Activated CD4-positive, alpha-beta T cell treated with anti-CD3 and anti-CD28 coated beads, Interleukin-2, amount 10 ng/mL, durations not matched to agents 24 days and 14 days (primary cell): ENCODE measurements at regions of chr9 and their contacts with region 1.

Region 1: DNA sequence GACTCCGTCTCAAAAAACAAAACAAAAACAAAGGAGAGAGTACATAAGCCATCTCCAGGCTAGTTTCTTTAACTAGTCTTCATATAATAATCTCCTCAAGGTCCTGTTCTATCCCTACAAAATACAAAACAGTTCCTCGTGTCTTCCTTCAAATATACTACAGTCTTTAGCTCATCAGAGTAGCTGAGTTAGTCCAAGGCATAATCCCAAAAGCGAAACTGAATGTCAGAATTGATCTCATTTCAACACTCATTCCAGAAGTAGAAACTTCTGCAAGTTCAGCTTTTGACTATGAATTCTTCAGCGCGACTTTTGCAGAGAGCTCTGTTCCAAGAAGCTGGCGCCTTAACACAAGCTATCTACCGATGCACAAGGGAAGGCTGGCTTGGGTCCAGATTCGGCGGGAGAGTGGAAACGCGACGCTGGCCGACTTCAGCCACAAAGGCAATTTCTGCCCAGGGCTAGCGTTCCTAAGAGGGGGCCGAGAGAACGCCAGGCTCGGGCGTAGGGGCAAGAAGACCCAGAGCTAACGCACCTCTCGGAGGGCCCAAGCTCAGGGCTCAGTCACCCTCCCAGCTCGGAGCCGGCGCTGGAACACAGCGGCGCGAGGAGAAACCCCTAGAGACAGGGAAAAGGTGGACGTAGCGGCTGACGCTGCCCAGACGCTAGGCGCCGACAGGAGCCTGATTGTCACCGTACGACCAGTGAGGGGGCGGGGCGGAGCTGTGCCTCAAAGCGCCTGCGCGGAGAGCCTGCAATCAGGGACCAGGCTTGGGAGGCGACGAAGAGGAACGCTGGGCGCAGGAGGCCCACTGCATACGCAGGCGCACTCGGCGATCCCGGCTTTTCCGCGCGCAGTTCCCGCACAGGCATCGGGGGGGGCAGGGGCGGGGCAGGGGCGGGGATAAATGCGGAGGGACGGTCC is 469 bp upstream of the HSDL2 start:
- DNase-seq: peak; percentile 100
- H3K4me3 Mint-ChIP-seq: peak overlapping the region; percentile 100
- H3K27ac Mint-ChIP-seq: peak overlapping the region; percentile 100
- H3K4me1 Mint-ChIP-seq: peaks cover 42% of the 10 kb centered on the region
- H3K27me3 Mint-ChIP-seq: no peaks in the 10 kb centered on the region

Region 2: GRCh38 chr9:111631071-111631971 is 748.1 kb before region 1 on chr9 and contains the start of gene DNAJC25:
- intact Hi-C with region 1: loop called (anchors 1 kb)
- DNase-seq: peak; percentile 99
- H3K4me3 Mint-ChIP-seq: peak within 1 kb of the TSS; percentile 98
- H3K27ac Mint-ChIP-seq: peak within 1 kb of the TSS; percentile 92
- H3K4me1 Mint-ChIP-seq: peaks cover 42% of the 10 kb centered on the region
- H3K27me3 Mint-ChIP-seq: no peaks in the 10 kb centered on the region
- total RNA-seq, gene DNAJC25: 7.1 and 7.5 TPM in 2 replicates

Region 3: GRCh38 chr9:112097712-112098688 is 281.4 kb before region 1 on chr9:
- intact Hi-C with region 1: loop called (anchors 5 kb)
- DNase-seq: peak; percentile 91
- H3K4me3 Mint-ChIP-seq: no peak overlapping the region
- H3K27ac Mint-ChIP-seq: peak overlapping the region; percentile 23
- H3K4me1 Mint-ChIP-seq: peaks cover 29% of the 10 kb centered on the region
- H3K27me3 Mint-ChIP-seq: no peaks in the 10 kb centered on the region

Region 4: GRCh38 chr9:112203536-112203935 is 175.9 kb before region 1 on chr9:
- intact Hi-C with region 1: no loop called
- DNase-seq: no peak
- H3K4me3 Mint-ChIP-seq: no peak overlapping the region
- H3K27ac Mint-ChIP-seq: no peak overlapping the region
- H3K4me1 Mint-ChIP-seq: peaks cover 3% of the 10 kb centered on the region
- H3K27me3 Mint-ChIP-seq: no peaks in the 10 kb centered on the region

Region 5: DNA sequence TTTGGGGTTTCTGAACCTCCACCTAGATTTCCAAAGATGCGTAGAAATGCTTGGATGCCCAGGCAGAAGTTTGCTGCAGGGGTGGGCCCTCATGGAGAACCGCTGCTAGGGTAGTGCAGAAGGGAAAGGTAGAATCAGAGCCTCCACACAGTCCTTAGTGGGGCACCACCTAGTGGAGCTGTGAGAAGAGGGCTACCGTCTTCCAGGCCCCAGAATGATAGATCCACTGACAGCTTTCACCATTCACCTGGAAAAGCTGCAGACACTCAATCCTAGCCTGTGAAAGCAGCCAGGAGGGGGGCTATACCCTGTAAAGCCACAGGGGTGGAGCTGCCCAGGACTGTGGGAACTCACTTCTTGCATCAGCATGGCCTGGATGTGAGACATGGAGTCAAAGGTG is 12.8 kb before region 1 on chr9:
- intact Hi-C with region 1: no loop called
- DNase-seq: no peak
- H3K4me3 Mint-ChIP-seq: no peak overlapping the region
- H3K27ac Mint-ChIP-seq: no peak overlapping the region
- H3K4me1 Mint-ChIP-seq: peaks cover 6% of the 10 kb centered on the region
- H3K27me3 Mint-ChIP-seq: peaks cover 11% of the 10 kb centered on the region

Region 6: DNA sequence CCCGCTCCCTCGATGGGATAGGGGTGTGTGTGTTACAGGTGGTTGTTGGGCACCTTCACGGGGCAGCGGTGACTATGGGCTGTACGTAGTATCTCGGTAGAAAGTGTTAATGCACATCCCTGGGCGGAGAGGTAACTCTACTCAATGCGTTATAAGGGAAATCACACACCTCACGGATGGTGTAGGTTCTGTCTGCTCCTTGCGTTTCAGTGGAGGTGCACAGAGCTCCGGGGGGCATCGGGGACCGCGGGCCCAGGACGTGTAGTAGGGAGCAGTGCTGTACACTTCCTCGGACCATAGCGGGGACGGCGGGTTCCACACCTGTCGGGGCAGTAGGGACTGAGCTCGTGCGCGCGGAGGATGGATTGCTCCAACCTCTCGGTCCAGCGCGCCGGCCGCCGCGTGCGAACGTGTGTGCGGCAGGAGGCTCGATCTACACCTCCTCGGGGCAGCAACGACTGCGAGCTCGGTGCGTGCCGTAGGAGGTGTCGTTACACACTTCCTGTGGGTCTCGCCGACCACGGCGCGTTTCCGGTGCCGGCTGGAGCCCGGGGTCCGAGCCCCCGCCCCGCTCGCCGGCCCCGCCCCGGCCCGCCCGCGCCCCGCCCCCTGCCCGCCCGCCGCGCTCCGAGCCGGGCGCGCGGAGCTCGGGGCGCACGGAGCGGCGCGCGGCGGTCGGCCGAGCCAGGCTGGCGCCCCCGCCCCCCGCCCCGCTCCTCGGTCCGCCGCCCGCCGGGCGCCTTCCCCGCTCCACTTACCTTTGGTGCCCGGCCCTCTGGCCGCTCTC is 107.0 kb after region 1 on chr9 and contains the start of gene KIAA1958:
- intact Hi-C with region 1: loop called (anchors 1 kb)
- DNase-seq: peak; percentile 96
- H3K4me3 Mint-ChIP-seq: peak within 1 kb of the TSS; percentile 98
- H3K27ac Mint-ChIP-seq: peak within 1 kb of the TSS; percentile 98
- H3K4me1 Mint-ChIP-seq: peaks cover 28% of the 10 kb centered on the region
- H3K27me3 Mint-ChIP-seq: peaks cover 3% of the 10 kb centered on the region
- total RNA-seq, gene KIAA1958: 9.8 and 10.6 TPM in 2 replicates

Region 7: GRCh38 chr9:112793213-112793810 is 413.9 kb after region 1 on chr9:
- intact Hi-C with region 1: loop called (anchors 1 kb)
- DNase-seq: peak; percentile 93
- H3K4me3 Mint-ChIP-seq: no peak overlapping the region
- H3K27ac Mint-ChIP-seq: no peak overlapping the region
- H3K4me1 Mint-ChIP-seq: peaks cover 4% of the 10 kb centered on the region
- H3K27me3 Mint-ChIP-seq: no peaks in the 10 kb centered on the region